AG04450 (cell line): ENCODE measurements at regions of chr5 and their contacts with region 1.

Region 1: DNA sequence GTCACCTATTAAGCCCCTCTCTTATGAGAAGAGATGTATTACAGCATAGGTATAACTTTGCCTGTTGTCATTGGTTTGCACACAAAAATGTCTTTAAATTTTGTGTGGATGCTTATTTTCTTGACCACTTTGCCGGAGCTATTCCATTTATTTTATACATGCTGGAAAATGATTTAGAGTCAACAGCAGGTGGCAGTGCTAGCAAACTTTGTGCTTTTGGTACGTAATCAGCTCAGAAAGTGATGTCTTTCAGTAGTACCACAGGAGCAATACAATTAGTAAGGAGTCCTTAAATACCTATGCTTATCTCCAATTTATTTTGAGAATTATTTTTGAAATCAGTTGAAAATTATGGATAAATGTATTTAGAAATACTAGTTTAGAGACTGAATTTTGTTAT is 19.8 kb upstream of the NUDT12 start:
- DNase-seq: peak; percentile 6
- H3K4me3 ChIP-seq: no peak overlapping the region
- H3K27ac ChIP-seq: no peak overlapping the region
- H3K27me3 ChIP-seq: no peaks in the 10 kb centered on the region
- CTCF ChIP-seq: peak; percentile 58

Region 2: DNA sequence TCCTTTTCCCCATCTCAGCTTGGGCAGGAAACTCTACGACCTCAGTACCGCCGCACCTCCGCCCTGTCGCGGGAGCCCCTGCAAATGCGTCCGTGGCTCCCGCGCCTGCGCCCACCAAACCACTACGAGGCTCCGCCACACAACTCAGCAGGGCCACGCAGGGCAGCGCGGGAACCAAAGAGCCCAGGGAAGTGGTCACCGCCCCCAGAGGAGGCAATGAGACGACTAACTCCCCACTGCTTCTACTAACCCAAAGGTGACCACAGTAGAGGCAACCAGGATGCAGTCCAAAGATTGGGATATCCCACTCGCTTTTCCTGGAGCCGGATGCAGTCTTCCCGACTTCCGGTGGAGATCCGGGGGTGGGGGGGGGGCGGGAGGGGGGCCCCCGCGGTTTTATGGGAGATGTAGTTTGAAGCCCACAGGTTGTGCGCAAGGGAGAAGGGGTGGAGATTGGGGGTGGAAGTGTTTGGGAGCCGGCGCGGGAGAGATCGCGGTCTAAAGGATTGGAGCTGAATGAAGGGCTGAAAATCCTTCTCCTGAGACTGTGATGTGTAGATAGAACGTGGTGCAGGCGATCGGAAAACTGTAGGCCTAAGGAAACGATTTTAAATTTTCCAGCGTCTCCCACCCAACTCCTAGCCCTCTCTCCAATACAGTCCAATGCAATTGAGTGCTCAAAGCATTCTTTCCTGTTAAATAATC is 19.8 kb before region 1 on chr5 and contains the start of gene NUDT12:
- CTCF ChIA-PET with region 1: interaction called, 17 read pairs
- POLR2A ChIA-PET with region 1: no interaction called
- DNase-seq: peak; percentile 20
- H3K4me3 ChIP-seq: peak within 1 kb of the TSS; percentile 83
- H3K27ac ChIP-seq: peak within 1 kb of the TSS; percentile 82
- H3K27me3 ChIP-seq: no peaks in the 10 kb centered on the region
- CTCF ChIP-seq: no peak
- polyA plus RNA-seq, gene NUDT12: 8.1 and 12.3 TPM in 2 replicates

Region 3: GRCh38 chr5:103569313-103570060 is 12.9 kb before region 1 on chr5:
- CTCF ChIA-PET with region 1: interaction called, 11 read pairs
- POLR2A ChIA-PET with region 1: no interaction called
- DNase-seq: no peak
- H3K4me3 ChIP-seq: no peak overlapping the region
- H3K27ac ChIP-seq: no peak overlapping the region
- H3K27me3 ChIP-seq: no peaks in the 10 kb centered on the region
- CTCF ChIP-seq: no peak

Region 4: GRCh38 chr5:103598997-103599566 is 16.7 kb after region 1 on chr5:
- CTCF ChIA-PET with region 1: interaction called, 13 read pairs
- POLR2A ChIA-PET with region 1: no interaction called
- DNase-seq: no peak
- H3K4me3 ChIP-seq: no peak overlapping the region
- H3K27ac ChIP-seq: no peak overlapping the region
- H3K27me3 ChIP-seq: no peaks in the 10 kb centered on the region
- CTCF ChIP-seq: no peak

Region 5: DNA sequence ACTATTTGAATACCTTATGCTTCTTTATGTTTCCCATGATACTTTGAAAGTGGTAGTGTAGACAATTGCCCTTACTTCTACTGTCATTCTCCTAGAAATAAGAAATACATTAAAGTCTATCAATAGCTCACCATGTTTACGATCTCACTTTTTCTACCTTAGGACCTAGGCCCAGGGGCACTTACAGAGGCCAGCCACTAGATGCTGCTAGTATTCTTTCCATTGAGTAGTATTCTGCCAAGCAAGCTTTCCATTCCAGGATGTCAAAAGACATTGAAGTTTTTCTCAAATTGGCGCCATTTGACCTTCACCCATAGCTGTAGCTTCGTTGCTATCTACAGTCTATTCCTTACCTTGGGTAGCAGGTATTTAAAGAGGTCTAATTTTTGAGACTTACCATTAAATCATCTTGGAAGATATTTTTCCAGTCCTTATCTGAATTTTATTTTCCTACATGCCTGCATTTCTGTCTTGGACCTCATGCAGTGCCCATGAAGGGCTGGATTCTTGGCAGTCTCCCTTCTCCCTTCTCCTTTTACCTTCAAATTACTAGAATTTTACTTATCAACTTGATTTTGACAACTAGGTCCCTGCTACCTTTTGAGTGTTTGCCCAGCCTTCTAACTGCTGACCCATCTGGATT is 226.2 kb after region 1 on chr5:
- CTCF ChIA-PET with region 1: interaction called, 28 read pairs
- POLR2A ChIA-PET with region 1: no interaction called
- DNase-seq: peak; percentile 27
- H3K4me3 ChIP-seq: no peak overlapping the region
- H3K27ac ChIP-seq: no peak overlapping the region
- H3K27me3 ChIP-seq: no peaks in the 10 kb centered on the region
- CTCF ChIP-seq: peak; percentile 100